ENCODE measurements at regions of chr17 and their contacts with region 1.

Region 1: GRCh38 chr17:52470554-52470953 is 312.0 kb upstream of the CA10 start:
- DNase-seq: no peak
- ATAC-seq: no peak
- H3K4me3 ChIP-seq: no peak overlapping the region
- H3K27ac ChIP-seq: no peak overlapping the region
- H3K4me1 ChIP-seq: no peaks in the 10 kb centered on the region
- H3K27me3 ChIP-seq: peaks cover 0 to 1% of the 10 kb centered on the region in 2 donors

Region 2: DNA sequence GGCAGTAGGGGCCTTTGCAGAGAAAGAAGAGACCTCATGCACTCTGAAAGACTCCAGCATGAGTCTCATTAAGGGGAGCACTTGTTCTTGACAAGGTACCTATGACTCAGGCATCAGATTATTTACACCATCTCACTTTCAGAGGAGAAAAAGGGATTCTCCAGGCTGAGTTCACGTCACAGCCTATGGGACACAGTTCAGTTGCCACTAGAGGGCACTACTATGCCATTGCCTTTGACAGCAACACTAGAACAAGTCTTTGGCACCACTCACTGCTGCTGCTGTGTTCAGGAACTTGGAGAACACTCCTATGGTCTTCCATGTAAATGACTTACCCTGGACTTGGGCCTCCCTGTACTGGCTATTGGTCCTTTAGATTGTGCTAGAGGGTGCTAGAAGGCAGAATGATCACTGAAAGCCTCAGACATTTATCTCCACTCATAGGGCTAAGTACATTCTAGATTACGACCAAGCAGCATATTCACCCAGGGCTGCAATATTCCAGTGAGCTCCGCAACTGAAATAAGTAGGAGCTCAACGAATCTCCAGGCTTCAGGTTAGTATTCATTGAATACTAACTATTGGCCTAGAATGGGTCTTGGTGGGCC is 87.0 kb before region 1 on chr17:
- intact Hi-C with region 1: loop called in 1 of 2 experiments (anchors 5 kb)
- DNase-seq: no peak
- ATAC-seq: peak; percentile 65
- H3K4me3 ChIP-seq: no peak overlapping the region
- H3K27ac ChIP-seq: no peak overlapping the region
- H3K4me1 ChIP-seq: no peaks in the 10 kb centered on the region
- H3K27me3 ChIP-seq: no peaks in the 10 kb centered on the region

Region 3: GRCh38 chr17:52418901-52419641 is 51.5 kb before region 1 on chr17:
- intact Hi-C with region 1: no loop called
- DNase-seq: no peak
- ATAC-seq: peak; percentile 72
- H3K4me3 ChIP-seq: no peak overlapping the region
- H3K27ac ChIP-seq: peak overlapping the region in 1 of 2 donors; percentile 3
- H3K4me1 ChIP-seq: peaks cover 2 to 3% of the 10 kb centered on the region in 2 donors
- H3K27me3 ChIP-seq: no peaks in the 10 kb centered on the region

Region 4: DNA sequence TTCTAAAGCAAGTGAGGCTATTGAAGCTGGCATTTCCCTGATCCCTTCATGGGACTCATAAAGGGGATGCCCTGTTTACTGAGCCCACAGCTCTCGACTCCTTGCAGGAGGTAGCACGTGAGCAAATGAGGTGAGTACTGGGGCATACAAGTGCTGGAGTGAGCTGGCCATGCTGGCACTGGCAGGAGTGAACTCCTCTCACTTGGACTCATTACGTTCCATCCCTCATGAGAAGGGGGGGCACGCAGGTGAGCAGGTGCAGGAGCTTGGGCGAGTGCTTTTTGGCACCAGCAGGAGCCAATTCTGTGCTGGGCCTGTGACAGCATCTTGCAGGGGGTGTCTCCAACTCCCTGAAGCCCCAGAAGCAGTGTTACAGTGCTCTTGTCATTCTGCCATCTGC is 25.1 kb after region 1 on chr17:
- intact Hi-C with region 1: no loop called
- DNase-seq: peak in 1 of 2 donors; percentile 61
- ATAC-seq: no peak
- H3K4me3 ChIP-seq: no peak overlapping the region
- H3K27ac ChIP-seq: no peak overlapping the region
- H3K4me1 ChIP-seq: no peaks in the 10 kb centered on the region
- H3K27me3 ChIP-seq: no peaks in the 10 kb centered on the region

Measured in aorta (tissue), 5 donors.